OCI-LY7 (cell line): ENCODE measurements at regions of chr9 and their contacts with region 1.

Region 1: DNA sequence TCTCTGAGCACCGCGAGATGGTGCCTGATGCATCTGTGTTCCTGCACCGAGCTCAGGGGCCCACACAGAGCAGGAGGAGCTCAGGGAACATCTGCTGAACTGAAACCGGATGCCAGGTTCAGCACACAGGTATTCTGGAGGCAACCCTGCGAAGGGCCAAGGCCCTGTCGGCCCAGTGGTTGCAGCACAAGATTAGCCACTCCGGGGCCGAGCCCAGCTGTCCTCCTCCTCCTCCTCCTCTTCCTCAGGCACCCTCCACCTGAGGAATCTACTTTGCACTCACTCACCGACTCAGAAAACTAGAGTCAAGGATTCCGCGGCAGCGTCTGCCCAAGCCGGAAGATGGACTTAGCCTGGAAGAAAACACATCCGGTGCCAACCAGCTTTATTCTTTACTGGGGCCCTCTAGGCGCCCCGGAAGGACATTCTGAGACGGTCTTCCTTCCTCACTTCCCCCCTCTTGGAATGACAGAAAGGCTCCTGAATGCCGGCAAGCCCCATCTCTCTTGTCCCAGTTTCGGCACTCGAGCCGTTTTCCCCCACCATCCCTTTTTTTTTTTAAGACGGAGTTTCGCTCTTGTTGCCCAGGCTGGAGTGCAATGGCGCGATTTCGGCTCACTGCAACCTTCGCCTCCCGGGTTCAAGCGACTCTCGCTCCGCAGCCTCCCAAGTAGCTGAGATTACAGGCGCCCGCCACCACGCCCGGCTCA is at the start of gene ZBTB6:
- DNase-seq: peak; percentile 95
- H3K4me3 ChIP-seq: peak within 1 kb of the TSS; percentile 76
- H3K27ac ChIP-seq: peak within 1 kb of the TSS; percentile 88
- H3K4me1 ChIP-seq: peaks cover 24% of the 10 kb centered on the region
- CTCF ChIP-seq: no peak; the same call in 1 of the 2 replicates
- total RNA-seq, gene ZBTB6: 7.1 and 8.1 TPM in 2 replicates

Region 2: GRCh38 chr9:122923947-122924346 is 10.8 kb after region 1 on chr9:
- CTCF ChIA-PET with region 1: no interaction called
- POLR2A ChIA-PET with region 1: interaction called, 10 read pairs
- intact Hi-C with region 1: no loop called
- DNase-seq: peak; percentile 62
- H3K4me3 ChIP-seq: peak overlapping the region; percentile 28
- H3K27ac ChIP-seq: peak overlapping the region; percentile 51
- H3K4me1 ChIP-seq: peaks cover 16% of the 10 kb centered on the region
- CTCF ChIP-seq: no peak

Region 3: GRCh38 chr9:122931226-122932121 is 18.4 kb after region 1 on chr9 and contains the start of gene ZBTB26:
- CTCF ChIA-PET with region 1: no interaction called
- POLR2A ChIA-PET with region 1: interaction called, 13 read pairs
- intact Hi-C with region 1: loop called (anchors 1 kb)
- DNase-seq: peak; percentile 94
- H3K4me3 ChIP-seq: peak within 1 kb of the TSS; percentile 85
- H3K27ac ChIP-seq: peak within 1 kb of the TSS; percentile 70
- H3K4me1 ChIP-seq: peaks cover 19% of the 10 kb centered on the region
- CTCF ChIP-seq: no peak
- total RNA-seq, gene ZBTB26: 7.6 and 10.8 TPM in 2 replicates

Region 4: GRCh38 chr9:122940603-122941559 is 27.8 kb after region 1 on chr9 and contains the start of gene RABGAP1:
- CTCF ChIA-PET with region 1: no interaction called
- POLR2A ChIA-PET with region 1: interaction called, 16 read pairs
- intact Hi-C with region 1: no loop called
- DNase-seq: peak; percentile 99
- H3K4me3 ChIP-seq: peak within 1 kb of the TSS; percentile 92
- H3K27ac ChIP-seq: peak within 1 kb of the TSS; percentile 54
- H3K4me1 ChIP-seq: peaks cover 32% of the 10 kb centered on the region
- CTCF ChIP-seq: no peak
- total RNA-seq, gene RABGAP1: 16.8 and 24.2 TPM in 2 replicates

Region 5: GRCh38 chr9:123016631-123017030 is 103.5 kb after region 1 on chr9:
- CTCF ChIA-PET with region 1: no interaction called
- POLR2A ChIA-PET with region 1: no interaction called
- intact Hi-C with region 1: no loop called
- DNase-seq: no peak
- H3K4me3 ChIP-seq: no peak overlapping the region
- H3K27ac ChIP-seq: no peak overlapping the region
- H3K4me1 ChIP-seq: no peaks in the 10 kb centered on the region
- CTCF ChIP-seq: no peak